MCF 10A (cell line): ENCODE measurements at regions of chr19 and their contacts with region 1.

Region 1: GRCh38 chr19:14347999-14348889 is 33.0 kb upstream of the ADGRE5 start:
- DNase-seq: peak; percentile 66
- H3K4me3 Mint-ChIP-seq: peak overlapping the region; percentile 43
- H3K27ac Mint-ChIP-seq: no peak overlapping the region
- H3K4me1 Mint-ChIP-seq: peaks cover under 1% of the 10 kb centered on the region
- H3K27me3 Mint-ChIP-seq: no peaks in the 10 kb centered on the region
- CTCF ChIP-seq: peak; percentile 97

Region 2: GRCh38 chr19:14198384-14199376 is 149.6 kb before region 1 on chr19:
- CTCF ChIA-PET with region 1: interaction called, 38 read pairs
- POLR2A ChIA-PET with region 1: interaction called, 7 read pairs
- intact Hi-C with region 1: no loop called
- DNase-seq: no peak
- H3K4me3 Mint-ChIP-seq: no peak overlapping the region
- H3K27ac Mint-ChIP-seq: no peak overlapping the region
- H3K4me1 Mint-ChIP-seq: peaks cover 11% of the 10 kb centered on the region
- H3K27me3 Mint-ChIP-seq: no peaks in the 10 kb centered on the region
- CTCF ChIP-seq: no peak

Region 3: GRCh38 chr19:14218620-14219330 is 129.5 kb before region 1 on chr19:
- CTCF ChIA-PET with region 1: interaction called, 30 read pairs
- POLR2A ChIA-PET with region 1: interaction called, 6 read pairs
- intact Hi-C with region 1: no loop called
- DNase-seq: peak; percentile 42
- H3K4me3 Mint-ChIP-seq: no peak overlapping the region
- H3K27ac Mint-ChIP-seq: no peak overlapping the region
- H3K4me1 Mint-ChIP-seq: peaks cover 21% of the 10 kb centered on the region
- H3K27me3 Mint-ChIP-seq: no peaks in the 10 kb centered on the region
- CTCF ChIP-seq: no peak

Region 4: GRCh38 chr19:14248578-14249011 is 99.6 kb before region 1 on chr19:
- CTCF ChIA-PET with region 1: no interaction called
- POLR2A ChIA-PET with region 1: no interaction called
- intact Hi-C with region 1: no loop called
- DNase-seq: no peak
- H3K4me3 Mint-ChIP-seq: no peak overlapping the region
- H3K27ac Mint-ChIP-seq: no peak overlapping the region
- H3K4me1 Mint-ChIP-seq: no peaks in the 10 kb centered on the region
- H3K27me3 Mint-ChIP-seq: peaks cover 25% of the 10 kb centered on the region
- CTCF ChIP-seq: no peak

Region 5: GRCh38 chr19:14337510-14337909 is 10.7 kb before region 1 on chr19:
- CTCF ChIA-PET with region 1: interaction called, 19 read pairs
- POLR2A ChIA-PET with region 1: interaction called, 4 read pairs
- intact Hi-C with region 1: no loop called
- DNase-seq: peak; percentile 51
- H3K4me3 Mint-ChIP-seq: no peak overlapping the region
- H3K27ac Mint-ChIP-seq: no peak overlapping the region
- H3K4me1 Mint-ChIP-seq: no peaks in the 10 kb centered on the region
- H3K27me3 Mint-ChIP-seq: no peaks in the 10 kb centered on the region
- CTCF ChIP-seq: no peak

Region 6: DNA sequence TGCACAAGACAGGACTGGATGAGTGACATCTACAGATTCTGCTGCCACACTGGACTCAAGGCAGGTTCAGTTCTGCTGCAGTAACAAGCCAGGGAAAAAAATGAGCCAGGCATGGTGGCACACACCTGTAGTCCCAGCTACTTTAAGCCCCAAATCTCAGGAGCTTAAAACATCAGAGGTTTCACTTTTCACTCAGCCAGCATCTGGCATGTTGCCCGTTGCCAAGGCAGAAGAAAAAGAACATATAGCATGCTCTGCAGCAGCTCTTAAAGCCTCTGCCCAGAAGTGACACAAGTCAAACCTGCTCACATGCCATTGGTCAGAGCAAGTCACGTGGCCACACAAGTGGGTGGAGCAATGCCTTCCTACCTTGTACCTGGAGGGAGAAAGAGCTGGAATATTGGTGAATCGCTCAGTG is 18.3 kb after region 1 on chr19:
- CTCF ChIA-PET with region 1: interaction called, 12 read pairs
- POLR2A ChIA-PET with region 1: interaction called, 5 read pairs
- intact Hi-C with region 1: no loop called
- DNase-seq: peak; percentile 94
- H3K4me3 Mint-ChIP-seq: no peak overlapping the region
- H3K27ac Mint-ChIP-seq: peak overlapping the region; percentile 46
- H3K4me1 Mint-ChIP-seq: peaks cover 20% of the 10 kb centered on the region
- H3K27me3 Mint-ChIP-seq: no peaks in the 10 kb centered on the region
- CTCF ChIP-seq: no peak

Region 7: DNA sequence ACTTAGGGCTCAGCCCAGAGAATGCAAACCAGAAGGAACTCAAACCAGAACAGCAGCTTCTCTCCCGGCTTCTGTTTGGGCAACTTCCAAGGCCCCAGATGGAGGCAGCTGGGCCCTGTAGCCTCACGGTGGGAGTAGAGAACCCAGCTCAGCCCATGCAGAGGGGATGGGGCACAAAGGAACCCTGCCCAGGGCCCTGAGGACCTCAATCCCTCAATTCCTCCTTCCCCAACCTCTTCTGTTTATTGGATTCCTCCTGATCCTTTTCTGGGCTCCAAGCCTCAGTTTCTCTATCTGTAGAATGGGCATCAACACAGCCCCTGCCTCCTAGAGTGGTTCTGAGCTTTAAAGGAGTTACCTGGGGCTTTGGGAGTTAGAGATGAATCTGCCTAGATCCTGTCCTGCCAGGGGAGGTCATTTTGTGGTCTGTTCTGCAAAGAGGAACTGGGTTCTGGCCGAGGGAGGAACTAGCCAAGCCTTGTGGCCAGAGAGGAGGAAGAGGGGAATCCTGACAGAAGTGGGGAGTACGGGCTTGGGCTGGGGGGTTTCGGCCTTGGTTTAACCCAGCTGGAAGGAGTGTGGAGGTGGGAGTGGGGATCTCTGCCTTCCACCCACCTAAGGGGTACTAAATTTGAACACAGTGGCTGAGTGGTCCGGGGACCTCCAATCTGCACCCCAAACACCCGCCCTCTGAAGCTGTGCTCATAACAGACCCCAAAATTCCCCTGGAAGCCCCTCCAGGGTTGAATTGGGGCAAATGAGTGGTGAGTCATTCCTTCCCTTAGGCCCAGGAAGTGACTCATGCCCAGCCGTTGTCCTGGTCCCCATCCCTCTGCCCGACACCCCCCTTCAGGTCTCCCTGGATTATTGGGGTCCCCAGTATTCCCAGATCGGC is 35.7 kb after region 1 on chr19:
- CTCF ChIA-PET with region 1: interaction called, 14 read pairs
- POLR2A ChIA-PET with region 1: interaction called, 3 read pairs
- intact Hi-C with region 1: no loop called
- DNase-seq: peak; percentile 50
- H3K4me3 Mint-ChIP-seq: peak overlapping the region; percentile 63
- H3K27ac Mint-ChIP-seq: peak overlapping the region; percentile 85
- H3K4me1 Mint-ChIP-seq: peaks cover 34% of the 10 kb centered on the region
- H3K27me3 Mint-ChIP-seq: no peaks in the 10 kb centered on the region
- CTCF ChIP-seq: no peak